ENCODE measurements at regions of chrX and their contacts with region 1.

Region 1: DNA sequence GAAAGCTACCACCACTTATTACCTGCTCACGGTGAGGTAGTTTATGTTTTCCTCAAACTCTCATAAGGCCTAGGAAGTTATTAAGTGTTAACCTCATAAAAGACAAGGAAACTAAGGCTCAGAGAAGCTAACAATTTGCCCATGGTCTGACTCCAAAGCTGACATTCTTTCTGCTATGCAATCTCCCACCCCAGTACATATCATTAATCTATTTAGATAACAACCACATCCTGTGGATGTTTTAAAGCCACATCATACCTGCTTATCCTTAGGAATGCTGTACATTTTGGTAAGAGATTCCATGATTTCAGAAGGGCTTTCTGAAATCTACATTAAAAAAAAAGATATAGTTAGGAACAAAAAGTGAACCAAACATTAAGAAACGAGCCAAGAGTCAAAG is 55.4 kb downstream of the HUWE1 start:
- DNase-seq: no peak
- ATAC-seq: no peak
- H3K4me3 ChIP-seq: no peak overlapping the region
- H3K27ac ChIP-seq: no peak overlapping the region
- H3K4me1 ChIP-seq: no peaks in the 10 kb centered on the region
- H3K27me3 ChIP-seq: peaks cover 0 to 10% (median 0%) of the 10 kb centered on the region in 7 donors
- CTCF ChIP-seq: no peak

Region 2: DNA sequence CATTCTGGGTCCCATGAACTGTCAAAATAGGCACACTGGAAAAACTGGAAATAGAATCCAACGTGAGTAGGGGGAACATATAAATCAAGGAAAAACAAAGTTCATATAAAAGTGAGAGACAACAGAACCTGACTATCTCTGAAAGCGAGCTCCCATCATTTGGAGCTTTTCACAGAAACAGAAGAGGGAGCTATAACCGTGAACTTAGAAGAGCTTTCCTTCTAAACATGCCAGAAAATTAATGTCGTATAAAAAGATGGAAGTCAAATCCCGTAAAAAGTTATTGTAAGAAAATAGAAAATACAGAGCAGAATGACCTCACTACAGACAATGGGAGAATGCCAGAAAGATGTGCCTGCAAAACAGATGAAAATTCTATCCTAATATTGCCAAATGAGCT is 173.1 kb before region 1 on chrX:
- intact Hi-C with region 1: no loop called
- DNase-seq: no peak
- ATAC-seq: no peak
- H3K4me3 ChIP-seq: no peak overlapping the region
- H3K27ac ChIP-seq: no peak overlapping the region
- H3K4me1 ChIP-seq: no peaks in the 10 kb centered on the region
- H3K27me3 ChIP-seq: peaks cover 0 to 73% (median 0%) of the 10 kb centered on the region in 7 donors
- CTCF ChIP-seq: no peak

Region 3: DNA sequence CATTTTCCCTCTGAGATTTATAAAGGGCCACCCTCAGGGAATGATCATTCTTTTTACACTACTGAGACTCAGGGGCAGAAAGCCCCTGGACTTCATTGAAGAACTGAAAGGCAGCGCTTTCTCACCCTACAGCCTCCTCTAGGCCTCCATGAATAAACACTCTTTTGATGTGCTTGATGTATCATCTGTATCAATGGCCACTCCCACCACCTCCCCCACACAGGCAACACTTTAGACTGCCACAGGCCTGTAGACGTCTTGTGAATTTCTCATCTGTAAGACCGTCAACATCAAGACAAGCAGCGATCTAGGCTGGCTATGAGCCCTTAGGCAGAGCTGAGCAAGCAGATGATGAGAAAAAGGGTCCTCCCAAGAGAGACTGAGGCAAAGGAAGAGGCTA is 67.8 kb before region 1 on chrX:
- intact Hi-C with region 1: loop called in 1 of 10 experiments (anchors 5 kb)
- DNase-seq: no peak
- ATAC-seq: no peak
- H3K4me3 ChIP-seq: no peak overlapping the region
- H3K27ac ChIP-seq: no peak overlapping the region
- H3K4me1 ChIP-seq: no peaks in the 10 kb centered on the region
- H3K27me3 ChIP-seq: peaks cover 0 to 47% (median 0%) of the 10 kb centered on the region in 7 donors
- CTCF ChIP-seq: no peak

Region 4: DNA sequence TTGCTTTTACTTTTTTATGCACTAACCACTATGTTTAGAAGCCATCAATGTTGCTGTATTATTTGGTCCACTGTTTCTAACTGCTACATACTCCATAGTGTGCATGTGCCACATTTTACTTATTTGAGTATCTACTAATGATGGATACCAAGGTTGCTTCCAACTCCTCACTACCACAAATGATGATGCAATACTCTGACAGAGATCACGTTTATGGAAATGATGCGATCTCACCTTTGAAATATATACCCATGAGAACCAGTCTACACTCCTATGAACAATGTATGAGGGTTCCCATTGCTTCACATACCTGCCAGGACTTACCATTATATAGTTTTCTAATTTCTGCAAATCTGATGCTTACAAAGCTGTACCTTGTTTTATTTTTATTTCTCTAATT is 11.2 kb after region 1 on chrX:
- intact Hi-C with region 1: loop called in 1 of 10 experiments (anchors 2 kb)
- DNase-seq: no peak
- ATAC-seq: no peak
- H3K4me3 ChIP-seq: no peak overlapping the region
- H3K27ac ChIP-seq: no peak overlapping the region
- H3K4me1 ChIP-seq: no peaks in the 10 kb centered on the region
- H3K27me3 ChIP-seq: peaks cover 0 to 28% (median 0%) of the 10 kb centered on the region in 7 donors
- CTCF ChIP-seq: no peak

Region 5: DNA sequence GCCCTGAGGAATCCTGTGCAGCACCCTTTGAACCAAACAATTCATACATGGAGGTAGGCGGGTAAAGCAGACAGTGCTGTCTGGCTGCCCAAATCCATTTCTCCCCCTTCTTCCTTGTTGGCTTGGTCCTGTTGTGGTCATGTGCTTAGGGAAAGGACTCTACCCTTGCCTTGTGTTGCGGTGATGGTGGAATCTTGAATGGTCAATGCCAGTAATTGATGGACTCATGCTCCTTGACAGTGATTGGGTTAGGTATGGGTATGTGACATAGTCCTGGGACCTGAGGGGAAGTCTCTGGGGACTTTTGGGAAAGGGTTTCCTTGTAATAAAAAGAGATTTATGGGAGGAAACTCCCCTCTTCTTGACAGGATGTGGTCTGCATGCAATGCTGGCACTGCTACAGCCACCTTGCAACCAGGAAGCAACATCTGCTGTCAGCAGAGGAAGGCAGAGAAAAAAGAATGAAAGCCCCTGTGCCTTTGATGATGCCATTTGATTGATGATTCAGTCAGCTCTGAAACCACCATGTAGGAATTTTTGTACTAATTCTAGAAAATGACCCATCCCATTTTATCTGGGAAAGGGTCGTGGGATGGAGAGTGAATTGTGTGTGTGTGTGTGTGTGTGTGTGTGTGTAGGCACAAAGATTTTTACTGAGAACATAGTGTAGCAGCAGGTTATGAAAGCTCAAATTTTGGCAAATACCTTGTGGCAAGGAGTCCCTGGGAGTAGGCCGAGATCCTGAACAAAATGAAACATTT is 85.4 kb after region 1 on chrX:
- intact Hi-C with region 1: no loop called
- DNase-seq: no peak
- ATAC-seq: no peak
- H3K4me3 ChIP-seq: no peak overlapping the region
- H3K27ac ChIP-seq: peak overlapping the region in 1 of 10 donors; percentile 49
- H3K4me1 ChIP-seq: peaks cover 0 to 30% (median 0%) of the 10 kb centered on the region in 9 donors
- H3K27me3 ChIP-seq: peaks cover 0 to 11% (median 0%) of the 10 kb centered on the region in 7 donors
- CTCF ChIP-seq: no peak

Region 6: GRCh38 chrX:53864591-53864990 is 233.4 kb after region 1 on chrX:
- intact Hi-C with region 1: no loop called
- DNase-seq: no peak
- ATAC-seq: no peak
- H3K4me3 ChIP-seq: no peak overlapping the region
- H3K27ac ChIP-seq: no peak overlapping the region
- H3K4me1 ChIP-seq: no peaks in the 10 kb centered on the region
- H3K27me3 ChIP-seq: no peaks in the 10 kb centered on the region
- CTCF ChIP-seq: no peak